Naive thymus-derived CD8-positive, alpha-beta T cell (primary cell): ENCODE measurements at regions of chr1 and their contacts with region 1.

Region 1: GRCh38 chr1:206734499-206735142 is 36.0 kb upstream of the IL19 start:
- DNase-seq: peak; percentile 64 to 88 (median 74)
- ATAC-seq: peak; percentile 55 to 75
- H3K4me3 Mint-ChIP-seq: peak overlapping the region in 5 of 10 donors; percentile 5 to 60 (median 26)
- H3K27ac Mint-ChIP-seq: peak overlapping the region; percentile 61 to 95 (median 86)
- H3K4me1 Mint-ChIP-seq: peaks cover 39 to 61% (median 56%) of the 10 kb centered on the region in 4 donors
- H3K27me3 Mint-ChIP-seq: no peaks in the 10 kb centered on the region

Region 2: GRCh38 chr1:206808615-206809014 is 74.0 kb after region 1 on chr1:
- POLR2A ChIA-PET with region 1: interaction called, 65 read pairs
- DNase-seq: peak in 9 of 10 donors; percentile 33 to 82 (median 64)
- ATAC-seq: peak; percentile 88 to 97
- H3K4me3 Mint-ChIP-seq: no peak overlapping the region
- H3K27ac Mint-ChIP-seq: peak overlapping the region in 9 of 10 donors; percentile 26 to 82 (median 72)
- H3K4me1 Mint-ChIP-seq: peaks cover 22 to 47% (median 41%) of the 10 kb centered on the region in 4 donors
- H3K27me3 Mint-ChIP-seq: no peaks in the 10 kb centered on the region